PC-3 (cell line): ENCODE measurements at regions of chr17 and their contacts with region 1.

Region 1: DNA sequence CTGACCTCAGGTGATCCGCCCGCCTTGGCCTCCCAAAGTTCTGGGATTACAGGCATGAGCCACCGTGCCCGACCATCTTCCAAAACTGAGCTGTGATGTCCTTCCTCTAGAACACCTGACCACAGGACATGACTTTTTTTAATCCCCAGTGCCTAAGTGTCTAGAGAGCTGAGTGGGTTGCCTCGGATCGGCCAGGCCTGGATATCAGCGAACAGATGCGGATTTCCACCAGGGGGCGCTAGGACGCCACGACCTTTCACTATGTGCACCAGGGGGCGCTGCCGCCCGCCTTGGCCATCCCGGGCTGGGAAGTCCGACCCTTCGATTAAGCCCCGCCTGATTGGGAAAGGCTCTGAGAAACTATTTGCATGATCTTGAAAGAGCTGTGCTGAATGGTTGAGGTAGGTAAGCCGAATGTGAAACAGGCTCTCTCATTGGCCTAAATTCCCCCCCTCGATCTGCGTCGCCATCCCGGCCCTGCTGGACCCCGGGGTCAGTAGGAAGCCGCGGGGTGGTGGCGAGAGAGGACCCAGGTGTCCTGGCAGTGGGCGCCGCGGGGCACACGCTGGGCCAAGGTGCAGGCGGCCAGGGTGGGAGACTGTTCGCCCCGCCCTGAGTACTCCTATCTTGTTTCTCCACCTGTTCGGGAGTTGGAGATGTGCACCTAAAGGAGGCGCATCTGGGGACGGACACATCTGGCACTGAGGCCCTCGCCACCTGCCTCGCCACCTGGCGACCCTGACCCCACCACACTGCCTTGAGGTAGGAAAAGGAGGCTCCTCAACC is at the start of gene ACBD4:
- DNase-seq: peak; percentile 99
- ATAC-seq: peak; percentile 69
- H3K4me3 ChIP-seq: peak within 1 kb of the TSS; percentile 70
- H3K27ac ChIP-seq: no peak within 1 kb of the TSS
- H3K4me1 ChIP-seq: peaks cover 22% of the 10 kb centered on the region
- H3K27me3 ChIP-seq: no peaks in the 10 kb centered on the region
- CTCF ChIP-seq: peak; percentile 100
- total RNA-seq, gene ACBD4: 12.9 and 17.3 TPM in 2 replicates

Region 2: DNA sequence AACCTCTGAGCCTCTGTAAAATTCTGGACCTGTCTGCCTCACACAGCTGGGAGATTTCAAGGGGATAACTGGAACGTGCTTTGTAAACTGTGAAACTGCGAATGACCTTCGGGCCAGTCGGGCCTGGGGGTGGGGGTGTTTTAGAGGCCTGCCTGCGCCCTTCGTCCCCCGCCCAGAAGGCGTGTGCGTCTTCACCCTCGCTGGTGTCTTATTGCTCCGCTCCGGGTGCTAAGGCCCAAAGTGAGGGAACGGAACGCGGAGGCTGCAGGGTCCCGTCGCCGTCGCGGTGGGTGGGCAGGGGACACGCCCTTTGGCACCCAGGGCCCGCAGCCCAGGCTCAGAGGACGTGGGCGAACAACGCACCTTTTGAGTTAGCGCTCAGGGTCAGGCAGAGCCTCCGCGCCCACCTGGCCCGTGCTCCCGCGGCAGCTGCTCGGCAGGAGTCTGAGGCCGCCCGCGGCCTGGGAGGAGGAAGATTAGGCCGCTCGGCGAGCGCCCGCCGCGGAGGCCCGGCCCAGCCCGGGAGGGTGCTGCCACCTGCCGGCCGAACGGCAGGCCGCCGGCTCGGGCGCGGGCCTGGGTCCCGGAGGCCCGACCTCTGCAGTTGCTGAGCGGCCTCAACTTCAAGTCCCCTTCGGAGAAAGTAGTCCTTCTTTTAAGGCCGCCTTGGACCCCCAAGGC is 113.6 kb before region 1 on chr17:
- CTCF ChIA-PET with region 1: no interaction called
- POLR2A ChIA-PET with region 1: no interaction called
- intact Hi-C with region 1: loop called (anchors 2 kb)
- DNase-seq: peak; percentile 79
- ATAC-seq: peak; percentile 68
- H3K4me3 ChIP-seq: peak overlapping the region; percentile 51
- H3K27ac ChIP-seq: no peak overlapping the region
- H3K4me1 ChIP-seq: peaks cover 19% of the 10 kb centered on the region; the same call in 1 of the 2 replicates
- H3K27me3 ChIP-seq: no peaks in the 10 kb centered on the region
- CTCF ChIP-seq: peak; percentile 96

Region 3: GRCh38 chr17:45108595-45109521 is 26.5 kb before region 1 on chr17:
- CTCF ChIA-PET with region 1: interaction called, 15 read pairs
- POLR2A ChIA-PET with region 1: no interaction called
- intact Hi-C with region 1: loop called (anchors 1 kb)
- DNase-seq: peak; percentile 39
- ATAC-seq: peak; percentile 39
- H3K4me3 ChIP-seq: no peak overlapping the region
- H3K27ac ChIP-seq: no peak overlapping the region
- H3K4me1 ChIP-seq: no peaks in the 10 kb centered on the region
- H3K27me3 ChIP-seq: no peaks in the 10 kb centered on the region
- CTCF ChIP-seq: peak; percentile 51

Region 4: GRCh38 chr17:45161019-45161825 is 25.8 kb after region 1 on chr17:
- CTCF ChIA-PET with region 1: interaction called, 22 read pairs
- POLR2A ChIA-PET with region 1: no interaction called
- intact Hi-C with region 1: no loop called
- DNase-seq: peak; percentile 100
- ATAC-seq: peak; percentile 87
- H3K4me3 ChIP-seq: peak overlapping the region; percentile 83
- H3K27ac ChIP-seq: peak overlapping the region; percentile 91
- H3K4me1 ChIP-seq: peaks cover 39% of the 10 kb centered on the region
- H3K27me3 ChIP-seq: no peaks in the 10 kb centered on the region
- CTCF ChIP-seq: no peak; the same call in 1 of the 2 replicates

Region 5: GRCh38 chr17:45197555-45198334 is 62.4 kb after region 1 on chr17:
- CTCF ChIA-PET with region 1: interaction called, 175 read pairs
- POLR2A ChIA-PET with region 1: interaction called, 5 read pairs
- intact Hi-C with region 1: loop called (anchors 1 kb)
- DNase-seq: peak; percentile 99
- ATAC-seq: peak; percentile 99
- H3K4me3 ChIP-seq: peak overlapping the region; percentile 8; the same call in 1 of the 2 replicates
- H3K27ac ChIP-seq: no peak overlapping the region
- H3K4me1 ChIP-seq: peaks cover 16% of the 10 kb centered on the region
- H3K27me3 ChIP-seq: no peaks in the 10 kb centered on the region
- CTCF ChIP-seq: peak; percentile 100

Region 6: DNA sequence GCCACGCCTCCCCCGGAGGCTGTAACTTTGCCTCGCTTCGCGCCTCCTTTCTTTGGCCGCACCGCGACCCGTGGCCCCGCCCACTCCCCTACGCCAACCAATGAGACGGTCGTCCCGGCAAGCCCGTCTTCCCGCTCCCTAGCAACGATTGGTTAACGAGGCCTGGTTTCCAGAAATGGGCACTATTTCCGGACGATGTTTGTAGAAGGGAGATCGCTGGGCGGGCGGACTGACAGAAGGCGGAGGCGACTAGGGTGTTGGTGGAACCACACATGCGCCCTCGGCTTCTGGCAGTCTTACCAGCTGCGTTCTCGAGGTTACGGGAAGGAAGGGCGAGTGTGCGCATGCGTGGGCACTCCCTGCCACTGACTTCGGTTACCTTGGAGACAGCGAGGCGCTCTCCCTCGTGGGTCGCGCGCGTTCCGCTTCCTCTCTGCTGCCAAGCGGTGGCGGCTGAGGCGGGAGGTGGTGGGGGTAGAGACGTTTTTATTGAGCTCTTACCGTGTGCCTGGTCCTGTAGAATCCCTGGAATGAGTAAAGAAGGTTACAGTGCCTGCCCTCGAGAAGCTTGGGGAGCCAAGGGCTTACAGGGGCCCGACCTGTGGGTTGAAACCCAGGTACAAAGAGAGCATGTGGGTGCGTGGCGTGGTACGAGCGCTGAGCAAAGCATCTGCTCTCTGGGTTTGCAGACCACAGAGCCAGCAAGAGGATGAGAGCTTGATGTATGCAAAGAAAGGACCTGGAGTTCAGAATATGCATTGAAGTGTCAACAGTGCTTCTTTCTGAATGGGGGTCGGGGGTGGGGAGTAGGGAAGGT is 181.9 kb after region 1 on chr17:
- CTCF ChIA-PET with region 1: interaction called, 10 read pairs
- POLR2A ChIA-PET with region 1: no interaction called
- intact Hi-C with region 1: loop called (anchors 10 kb)
- DNase-seq: peak; percentile 100
- ATAC-seq: peak; percentile 49
- H3K4me3 ChIP-seq: peak overlapping the region; percentile 78
- H3K27ac ChIP-seq: peak overlapping the region; percentile 94
- H3K4me1 ChIP-seq: peaks cover 82% of the 10 kb centered on the region
- H3K27me3 ChIP-seq: no peaks in the 10 kb centered on the region
- CTCF ChIP-seq: 0 out of 2 replicates have a peak, but pooled peaks have one; percentile 19

Region 7: DNA sequence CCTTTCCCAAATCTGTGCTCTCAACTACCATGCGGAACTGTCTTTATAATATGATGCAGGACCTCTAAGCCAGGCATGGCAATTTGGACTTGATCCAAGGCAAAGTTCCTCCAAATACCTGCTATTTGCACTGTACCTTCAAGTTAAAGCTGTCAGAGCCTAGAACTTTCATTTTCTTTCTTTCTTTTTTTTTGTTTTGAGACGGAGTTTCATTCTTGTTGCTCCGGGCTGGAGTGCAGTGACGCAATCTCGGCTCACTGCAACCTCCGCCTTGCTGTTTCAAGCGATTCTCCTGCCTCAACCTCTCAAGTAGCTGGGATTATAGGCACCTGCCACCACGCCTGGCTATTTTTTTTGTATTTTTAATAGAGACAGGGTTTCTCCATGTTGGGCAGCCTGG is 245.6 kb after region 1 on chr17:
- CTCF ChIA-PET with region 1: no interaction called
- POLR2A ChIA-PET with region 1: no interaction called
- intact Hi-C with region 1: no loop called
- DNase-seq: no peak
- ATAC-seq: no peak
- H3K4me3 ChIP-seq: no peak overlapping the region
- H3K27ac ChIP-seq: no peak overlapping the region
- H3K4me1 ChIP-seq: peaks cover 14% of the 10 kb centered on the region
- H3K27me3 ChIP-seq: no peaks in the 10 kb centered on the region
- CTCF ChIP-seq: no peak